ENCODE measurements at regions of chr20 and their contacts with region 1.

Region 1: GRCh38 chr20:4082406-4083097 is 67.2 kb upstream of the RNF24 start:
- DNase-seq: no peak
- H3K4me3 ChIP-seq: no peak overlapping the region
- H3K27me3 ChIP-seq: no peaks in the 10 kb centered on the region
- CTCF ChIP-seq: no peak

Region 2: DNA sequence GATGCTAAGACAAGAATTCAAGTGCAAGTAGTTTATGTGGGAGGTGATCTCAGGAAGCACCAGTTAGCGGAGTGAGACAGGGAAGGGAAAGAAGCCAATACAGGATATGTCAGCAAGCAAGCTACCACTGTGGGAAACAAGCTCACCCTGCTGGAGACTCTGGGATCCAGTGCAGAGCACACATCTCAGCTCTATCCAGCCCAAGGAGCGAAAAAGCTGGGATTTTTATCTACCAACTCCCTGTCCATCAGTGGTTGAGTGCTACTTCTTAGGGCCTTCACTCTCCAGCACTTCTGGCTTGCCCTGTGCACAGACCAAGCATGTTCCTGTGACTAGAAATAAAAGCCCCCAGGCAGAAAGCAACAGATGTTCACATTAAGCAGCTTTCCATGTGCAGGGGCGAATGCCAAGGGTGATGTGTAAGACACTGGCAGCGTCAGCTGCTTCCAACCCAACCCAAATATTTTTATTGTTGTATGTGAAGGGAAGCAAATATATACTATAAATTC is 56.4 kb before region 1 on chr20:
- CTCF ChIA-PET with region 1: interaction called, 10 read pairs
- POLR2A ChIA-PET with region 1: no interaction called
- DNase-seq: peak; percentile 52
- H3K4me3 ChIP-seq: no peak overlapping the region
- H3K27me3 ChIP-seq: peaks cover 2% of the 10 kb centered on the region; the same call in 1 of the 2 replicates
- CTCF ChIP-seq: peak; percentile 60

Measured in BJ (cell line).